ENCODE measurements at regions of chr6 and their contacts with region 1.

Region 1: GRCh38 chr6:84422380-84422968 is 195.0 kb upstream of the CEP162 start:
- DNase-seq: no peak
- ATAC-seq: peak; percentile 98
- H3K4me3 ChIP-seq: no peak overlapping the region
- H3K27ac ChIP-seq: no peak overlapping the region
- H3K4me1 ChIP-seq: no peaks in the 10 kb centered on the region
- H3K27me3 ChIP-seq: 0 out of 4 replicates have a peak, but pooled peaks cover 0 to 4% of the 10 kb centered on the region in 2 experiments
- CTCF ChIP-seq: peak; percentile 68 to 82 (median 76)
- EP300 ChIP-seq: no peak
- POLR2A ChIP-seq: no peak
- RAD21 ChIP-seq: peak; percentile 50

Region 2: GRCh38 chr6:84411060-84411629 is 11.3 kb before region 1 on chr6:
- CTCF ChIA-PET with region 1: interaction called, 24 read pairs
- POLR2A ChIA-PET with region 1: interaction called, 3 read pairs
- RAD21 ChIA-PET with region 1: interaction called, 12 read pairs
- SMC1A ChIA-PET with region 1: interaction called, 25 read pairs
- in situ Hi-C with region 1: no loop called
- intact Hi-C with region 1: no loop called
- DNase-seq: no peak
- ATAC-seq: peak; percentile 96
- H3K4me3 ChIP-seq: no peak overlapping the region
- H3K27ac ChIP-seq: no peak overlapping the region
- H3K4me1 ChIP-seq: no peaks in the 10 kb centered on the region
- H3K27me3 ChIP-seq: no peaks in the 10 kb centered on the region
- CTCF ChIP-seq: no peak
- EP300 ChIP-seq: peak; percentile 82 to 88; a peak in 2 of 4 replicates
- POLR2A ChIP-seq: no peak
- RAD21 ChIP-seq: no peak

Region 3: DNA sequence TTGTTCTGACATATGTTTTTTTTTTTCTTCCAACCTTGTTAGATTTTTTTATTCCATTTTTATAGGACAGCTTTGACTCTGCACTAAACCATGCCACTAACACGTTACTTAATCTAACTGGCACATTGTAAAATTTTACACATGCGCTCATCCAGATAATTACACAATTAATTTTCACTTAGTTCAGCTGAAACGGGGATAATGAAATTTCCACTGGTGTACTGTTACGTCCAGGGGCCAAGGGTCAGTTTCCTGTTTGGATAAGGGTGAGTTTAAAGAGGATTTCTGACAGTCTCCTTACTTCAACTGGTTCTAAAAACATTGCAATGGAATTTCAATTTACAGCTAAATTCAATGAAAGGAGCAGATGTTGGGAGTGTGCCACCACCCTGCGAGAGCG is 26.7 kb after region 1 on chr6:
- CTCF ChIA-PET with region 1: interaction called, 18 read pairs
- POLR2A ChIA-PET with region 1: no interaction called
- RAD21 ChIA-PET with region 1: interaction called, 4 read pairs
- SMC1A ChIA-PET with region 1: interaction called, 10 read pairs
- in situ Hi-C with region 1: no loop called
- intact Hi-C with region 1: no loop called
- DNase-seq: no peak
- ATAC-seq: no peak
- H3K4me3 ChIP-seq: no peak overlapping the region
- H3K27ac ChIP-seq: no peak overlapping the region
- H3K4me1 ChIP-seq: no peaks in the 10 kb centered on the region
- H3K27me3 ChIP-seq: no peaks in the 10 kb centered on the region
- CTCF ChIP-seq: no peak
- EP300 ChIP-seq: no peak
- POLR2A ChIP-seq: no peak
- RAD21 ChIP-seq: no peak

Region 4: GRCh38 chr6:84768442-84769174 is 346.1 kb after region 1 on chr6:
- CTCF ChIA-PET with region 1: interaction called, 16 read pairs
- POLR2A ChIA-PET with region 1: no interaction called
- RAD21 ChIA-PET with region 1: interaction called, 4 read pairs
- SMC1A ChIA-PET with region 1: interaction called, 6 read pairs
- in situ Hi-C with region 1: no loop called
- intact Hi-C with region 1: no loop called
- DNase-seq: no peak
- ATAC-seq: peak; percentile 72
- H3K4me3 ChIP-seq: no peak overlapping the region
- H3K27ac ChIP-seq: no peak overlapping the region
- H3K4me1 ChIP-seq: no peaks in the 10 kb centered on the region
- H3K27me3 ChIP-seq: peaks cover 2 to 20% of the 10 kb centered on the region in 2 experiments
- CTCF ChIP-seq: no peak
- EP300 ChIP-seq: no peak
- POLR2A ChIP-seq: no peak
- RAD21 ChIP-seq: no peak

Region 5: GRCh38 chr6:84779380-84779779 is 356.9 kb after region 1 on chr6:
- CTCF ChIA-PET with region 1: interaction called, 16 read pairs
- POLR2A ChIA-PET with region 1: no interaction called
- RAD21 ChIA-PET with region 1: interaction called, 11 read pairs
- SMC1A ChIA-PET with region 1: interaction called, 9 read pairs
- in situ Hi-C with region 1: no loop called
- intact Hi-C with region 1: no loop called
- DNase-seq: no peak
- ATAC-seq: no peak
- H3K4me3 ChIP-seq: no peak overlapping the region
- H3K27ac ChIP-seq: no peak overlapping the region
- H3K4me1 ChIP-seq: no peaks in the 10 kb centered on the region
- H3K27me3 ChIP-seq: peaks cover 0 to 2% of the 10 kb centered on the region in 2 experiments; a peak in 3 of 4 replicates
- CTCF ChIP-seq: 0 out of 6 replicates have a peak, but pooled peaks of 1 of the 3 experiments have one; percentile 10
- EP300 ChIP-seq: no peak
- POLR2A ChIP-seq: no peak
- RAD21 ChIP-seq: no peak

Region 6: DNA sequence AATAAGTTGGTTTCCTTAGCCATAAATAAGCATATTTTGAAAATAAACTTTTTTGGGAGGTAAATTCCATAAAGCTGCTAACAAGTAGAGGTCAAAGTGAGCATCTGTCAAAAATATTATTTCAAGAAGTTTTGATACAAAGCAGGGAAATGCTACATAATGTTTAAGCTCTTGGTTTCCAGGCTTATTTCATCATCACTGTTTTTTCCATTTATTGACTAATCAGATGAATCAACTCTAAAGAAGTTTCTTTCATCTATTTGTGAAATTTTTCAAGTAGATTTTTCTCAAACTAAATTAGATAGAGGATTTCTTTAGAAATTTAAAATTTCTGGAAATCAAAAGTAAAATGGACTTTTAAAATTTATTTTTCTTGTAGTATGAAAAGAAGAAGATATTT is 431.4 kb after region 1 on chr6:
- CTCF ChIA-PET with region 1: no interaction called
- POLR2A ChIA-PET with region 1: no interaction called
- RAD21 ChIA-PET with region 1: no interaction called
- SMC1A ChIA-PET with region 1: no interaction called
- in situ Hi-C with region 1: no loop called
- intact Hi-C with region 1: no loop called
- DNase-seq: no peak
- ATAC-seq: no peak
- H3K4me3 ChIP-seq: no peak overlapping the region
- H3K27ac ChIP-seq: no peak overlapping the region
- H3K4me1 ChIP-seq: no peaks in the 10 kb centered on the region
- H3K27me3 ChIP-seq: no peaks in the 10 kb centered on the region
- CTCF ChIP-seq: no peak
- EP300 ChIP-seq: no peak
- POLR2A ChIP-seq: no peak
- RAD21 ChIP-seq: no peak

Region 7: DNA sequence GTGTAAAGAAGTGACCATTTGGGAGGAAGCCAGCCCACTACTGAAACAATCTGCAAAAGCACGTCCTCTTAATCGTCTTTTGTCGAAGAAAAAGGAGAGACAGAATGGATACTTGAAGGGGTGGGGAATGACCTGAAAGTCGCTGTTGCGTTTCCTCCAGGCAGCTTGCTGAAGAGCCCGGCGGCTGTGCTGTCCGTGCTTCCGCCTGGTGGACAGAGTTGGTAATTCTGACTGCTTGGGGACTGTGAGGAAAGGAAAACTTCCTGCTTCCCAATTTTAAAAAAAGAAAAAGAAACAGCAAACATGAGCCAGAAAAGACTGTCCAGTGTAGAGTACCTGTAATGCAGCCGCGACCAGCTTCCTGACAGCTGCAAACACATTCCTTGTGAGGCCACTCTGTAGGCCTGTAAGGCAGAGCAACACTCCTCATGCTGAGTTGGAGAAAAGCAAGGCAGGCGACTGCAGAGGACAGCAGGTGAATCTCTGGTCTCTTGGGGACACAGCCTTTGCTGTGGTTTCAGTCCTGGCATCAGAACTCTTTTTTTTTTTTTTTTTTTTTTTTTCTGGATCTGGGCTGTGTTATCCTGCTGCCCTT is 593.0 kb after region 1 on chr6:
- CTCF ChIA-PET with region 1: interaction called, 3 read pairs
- POLR2A ChIA-PET with region 1: no interaction called
- RAD21 ChIA-PET with region 1: no interaction called
- SMC1A ChIA-PET with region 1: interaction called, 5 read pairs
- in situ Hi-C with region 1: no loop called
- intact Hi-C with region 1: loop called (anchors 2 kb)
- DNase-seq: no peak
- ATAC-seq: peak; percentile 92
- H3K4me3 ChIP-seq: no peak overlapping the region
- H3K27ac ChIP-seq: no peak overlapping the region
- H3K4me1 ChIP-seq: no peaks in the 10 kb centered on the region
- H3K27me3 ChIP-seq: no peaks in the 10 kb centered on the region
- CTCF ChIP-seq: peak; percentile 42 to 46 (median 46); a peak in 4 of 6 replicates
- EP300 ChIP-seq: no peak
- POLR2A ChIP-seq: no peak
- RAD21 ChIP-seq: 0 out of 2 replicates have a peak, but pooled peaks have one; percentile 35

Region 8: GRCh38 chr6:85323435-85324040 is 901.1 kb after region 1 on chr6:
- CTCF ChIA-PET with region 1: interaction called, 17 read pairs
- POLR2A ChIA-PET with region 1: no interaction called
- RAD21 ChIA-PET with region 1: interaction called, 9 read pairs
- SMC1A ChIA-PET with region 1: interaction called, 7 read pairs
- in situ Hi-C with region 1: loop called (anchors 5 kb)
- intact Hi-C with region 1: loop called (anchors 2 kb)
- DNase-seq: peak; percentile 25
- ATAC-seq: peak; percentile 93
- H3K4me3 ChIP-seq: no peak overlapping the region
- H3K27ac ChIP-seq: no peak overlapping the region
- H3K4me1 ChIP-seq: no peaks in the 10 kb centered on the region
- H3K27me3 ChIP-seq: no peaks in the 10 kb centered on the region; a peak in 1 of 4 replicates
- CTCF ChIP-seq: peak; percentile 80 to 88 (median 84)
- EP300 ChIP-seq: no peak
- POLR2A ChIP-seq: no peak
- RAD21 ChIP-seq: peak; percentile 92